CD8-positive, alpha-beta T cell (primary cell): ENCODE measurements at regions of chr4 and their contacts with region 1.

Region 1: DNA sequence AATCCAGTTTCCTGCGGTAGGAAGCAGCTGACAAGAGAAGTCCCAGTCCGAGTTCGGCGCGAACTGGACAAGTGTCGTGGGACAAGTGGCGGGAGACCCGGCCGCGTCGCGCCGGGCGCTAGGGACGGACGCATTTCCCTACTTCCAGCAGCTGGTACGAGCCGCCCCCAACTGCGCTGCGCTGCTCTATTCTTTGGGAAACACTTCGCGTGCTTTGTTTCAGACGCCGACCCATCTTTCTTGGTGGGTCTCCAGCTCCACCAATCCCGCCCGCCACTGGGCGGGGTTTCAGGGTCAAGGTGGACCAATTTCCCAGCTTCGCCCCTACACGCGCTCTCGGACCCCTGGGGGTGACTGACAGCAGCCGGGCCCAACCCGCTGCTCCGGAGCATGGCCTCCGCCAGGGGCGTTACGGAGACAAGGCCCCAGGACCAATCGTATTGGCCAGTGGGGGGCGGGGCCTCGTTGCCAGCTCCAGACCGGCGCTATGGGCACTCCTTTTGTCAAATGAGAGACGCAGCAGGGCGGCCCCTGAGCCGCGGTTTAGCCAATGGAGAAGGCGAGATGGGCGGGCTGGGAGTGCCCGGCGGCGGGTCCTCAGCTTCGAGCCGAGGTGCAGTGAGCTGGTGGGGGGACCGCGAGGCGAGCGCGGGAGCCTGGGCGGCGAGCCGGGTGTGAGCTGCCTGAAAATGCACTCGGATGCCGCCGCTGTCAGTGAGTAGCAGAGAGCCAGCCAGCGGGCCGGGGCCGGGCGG is at the start of gene DCUN1D4:
- DNase-seq: peak; percentile 96 to 99 (median 98)
- ATAC-seq: peak; percentile 81
- H3K4me3 ChIP-seq: peak within 1 kb of the TSS; percentile 73 to 97
- H3K4me3 Mint-ChIP-seq: peak within 1 kb of the TSS; percentile 95
- H3K27ac ChIP-seq: peak within 1 kb of the TSS; percentile 68 to 73
- H3K27ac Mint-ChIP-seq: peak within 1 kb of the TSS; percentile 92
- H3K4me1 ChIP-seq: peaks cover 4% of the 10 kb centered on the region
- H3K4me1 Mint-ChIP-seq: peaks cover 20% of the 10 kb centered on the region
- H3K27me3 ChIP-seq: no peaks in the 10 kb centered on the region
- H3K27me3 Mint-ChIP-seq: no peaks in the 10 kb centered on the region
- CTCF ChIP-seq: no peak
- total RNA-seq, gene DCUN1D4: 29.3 to 32.4 TPM

Region 2: GRCh38 chr4:51831133-51831532 is 11.6 kb before region 1 on chr4:
- CTCF ChIA-PET with region 1: interaction called, 25 read pairs
- POLR2A ChIA-PET with region 1: interaction called, 3 read pairs
- intact Hi-C with region 1: no loop called
- DNase-seq: peak; percentile 41 to 79 (median 68)
- ATAC-seq: peak; percentile 63
- H3K4me3 ChIP-seq: no peak overlapping the region
- H3K4me3 Mint-ChIP-seq: no peak overlapping the region
- H3K27ac ChIP-seq: no peak overlapping the region
- H3K27ac Mint-ChIP-seq: no peak overlapping the region
- H3K4me1 ChIP-seq: no peaks in the 10 kb centered on the region
- H3K4me1 Mint-ChIP-seq: no peaks in the 10 kb centered on the region
- H3K27me3 ChIP-seq: no peaks in the 10 kb centered on the region
- H3K27me3 Mint-ChIP-seq: peaks cover 11% of the 10 kb centered on the region
- CTCF ChIP-seq: peak; percentile 64

Region 3: DNA sequence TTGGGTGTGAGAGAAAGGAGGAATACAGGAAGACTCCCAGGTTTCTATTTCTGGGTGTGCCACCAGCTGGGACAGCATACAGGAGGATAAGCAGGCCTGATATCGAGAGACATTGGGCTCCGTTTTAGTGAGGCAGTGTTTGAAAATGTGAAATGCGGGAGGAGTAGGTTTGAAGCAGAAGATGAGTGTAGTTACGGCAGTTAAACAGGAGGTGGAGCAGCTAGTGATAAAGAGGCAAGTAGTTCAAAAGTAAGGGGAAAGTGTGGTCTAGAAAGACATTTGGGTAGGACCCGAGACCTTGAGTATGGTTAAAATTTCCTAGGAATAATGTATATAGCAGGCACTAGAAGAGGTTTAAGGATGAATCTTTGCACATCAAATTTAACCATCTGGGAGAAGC is 42.6 kb after region 1 on chr4:
- CTCF ChIA-PET with region 1: no interaction called
- POLR2A ChIA-PET with region 1: no interaction called
- intact Hi-C with region 1: no loop called
- DNase-seq: peak in 1 of 9 experiments; percentile 17
- ATAC-seq: no peak
- H3K4me3 ChIP-seq: no peak overlapping the region
- H3K4me3 Mint-ChIP-seq: no peak overlapping the region
- H3K27ac ChIP-seq: no peak overlapping the region
- H3K27ac Mint-ChIP-seq: no peak overlapping the region
- H3K4me1 ChIP-seq: no peaks in the 10 kb centered on the region
- H3K4me1 Mint-ChIP-seq: peaks cover 4% of the 10 kb centered on the region
- H3K27me3 ChIP-seq: no peaks in the 10 kb centered on the region
- H3K27me3 Mint-ChIP-seq: no peaks in the 10 kb centered on the region
- CTCF ChIP-seq: peak; percentile 23

Region 4: GRCh38 chr4:52038103-52038912 is 195.6 kb after region 1 on chr4 and contains the start of gene SGCB:
- CTCF ChIA-PET with region 1: no interaction called
- POLR2A ChIA-PET with region 1: interaction called, 4 read pairs
- intact Hi-C with region 1: loop called (anchors 1 to 5 kb)
- DNase-seq: peak; percentile 29 to 83 (median 72)
- ATAC-seq: peak; percentile 94
- H3K4me3 ChIP-seq: peak within 1 kb of the TSS; percentile 67 to 74
- H3K4me3 Mint-ChIP-seq: peak within 1 kb of the TSS; percentile 85
- H3K27ac ChIP-seq: no peak within 1 kb of the TSS
- H3K27ac Mint-ChIP-seq: peak within 1 kb of the TSS; percentile 19
- H3K4me1 ChIP-seq: peaks cover 14% of the 10 kb centered on the region
- H3K4me1 Mint-ChIP-seq: peaks cover 26% of the 10 kb centered on the region
- H3K27me3 ChIP-seq: no peaks in the 10 kb centered on the region
- H3K27me3 Mint-ChIP-seq: peaks cover 11% of the 10 kb centered on the region
- CTCF ChIP-seq: no peak
- total RNA-seq, gene SGCB: 3.0 to 3.1 TPM

Region 5: DNA sequence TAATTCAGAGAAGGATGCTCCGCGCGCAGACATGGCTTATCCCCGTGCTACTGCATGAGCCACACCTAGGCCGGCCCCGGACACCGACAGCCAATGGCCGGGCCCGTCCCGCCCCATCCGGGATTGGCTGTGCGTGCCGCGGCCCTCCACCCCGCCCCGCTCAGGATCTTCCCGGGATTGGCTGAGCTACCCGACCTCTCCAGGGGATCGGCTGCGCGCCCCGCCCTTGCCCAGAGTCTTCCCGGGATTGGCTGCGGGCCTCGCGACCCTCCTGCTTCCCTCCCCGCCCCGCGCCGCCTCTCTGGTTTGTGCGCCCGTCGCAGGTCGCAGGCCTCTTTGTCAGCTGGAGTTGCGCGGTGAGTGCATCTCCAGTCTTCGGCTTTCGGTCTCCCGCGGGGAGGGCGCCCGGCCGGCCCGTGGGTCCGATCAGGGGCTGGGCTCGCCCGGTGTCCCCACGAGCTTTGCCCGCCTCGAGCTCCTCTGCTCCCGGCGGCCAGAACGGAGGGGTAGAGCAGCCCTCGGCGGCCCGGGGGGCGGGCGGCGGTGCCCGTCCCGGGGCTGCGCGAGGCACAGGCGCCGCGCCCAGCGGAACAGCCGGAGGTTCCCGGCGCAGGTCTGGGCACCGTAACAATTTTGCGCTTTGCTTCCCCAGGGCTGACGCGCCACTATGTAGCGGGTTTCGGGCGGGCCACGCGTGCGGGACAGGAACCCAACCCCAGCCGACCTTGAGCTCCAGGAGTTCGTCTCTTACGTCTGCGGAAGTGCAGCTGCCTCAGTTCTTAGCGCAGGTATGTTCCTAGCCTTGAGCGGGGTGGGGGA is 869.6 kb after region 1 on chr4:
- CTCF ChIA-PET with region 1: no interaction called
- POLR2A ChIA-PET with region 1: interaction called, 10 read pairs
- intact Hi-C with region 1: no loop called
- DNase-seq: peak; percentile 90 to 97 (median 95)
- ATAC-seq: peak; percentile 89
- H3K4me3 ChIP-seq: peak overlapping the region; percentile 58 to 76
- H3K4me3 Mint-ChIP-seq: peak overlapping the region; percentile 92
- H3K27ac ChIP-seq: peak overlapping the region; percentile 82 to 89
- H3K27ac Mint-ChIP-seq: peak overlapping the region; percentile 96
- H3K4me1 ChIP-seq: peaks cover 29% of the 10 kb centered on the region
- H3K4me1 Mint-ChIP-seq: peaks cover 43% of the 10 kb centered on the region
- H3K27me3 ChIP-seq: no peaks in the 10 kb centered on the region
- H3K27me3 Mint-ChIP-seq: no peaks in the 10 kb centered on the region
- CTCF ChIP-seq: no peak

Region 6: GRCh38 chr4:52861879-52862616 is 1019.3 kb after region 1 on chr4 and contains the start of gene RASL11B:
- CTCF ChIA-PET with region 1: no interaction called
- POLR2A ChIA-PET with region 1: no interaction called
- intact Hi-C with region 1: loop called in 1 of 2 experiments (anchors 2 kb)
- DNase-seq: peak; percentile 67 to 89 (median 80)
- ATAC-seq: peak; percentile 99
- H3K4me3 ChIP-seq: peak within 1 kb of the TSS; percentile 52 to 65
- H3K4me3 Mint-ChIP-seq: peak within 1 kb of the TSS; percentile 72
- H3K27ac ChIP-seq: no peak within 1 kb of the TSS
- H3K27ac Mint-ChIP-seq: peak within 1 kb of the TSS; percentile 42
- H3K4me1 ChIP-seq: peaks cover 14% of the 10 kb centered on the region
- H3K4me1 Mint-ChIP-seq: peaks cover 5% of the 10 kb centered on the region
- H3K27me3 ChIP-seq: peaks cover 0 to 6% of the 10 kb centered on the region in 2 experiments
- H3K27me3 Mint-ChIP-seq: peaks cover 33% of the 10 kb centered on the region
- CTCF ChIP-seq: peak; percentile 33
- total RNA-seq, gene RASL11B: 0.64 TPM in 1 of 2 experiments, not detected in the other